ENCODE measurements at regions of chr9 and their contacts with region 1.

Region 1: GRCh38 chr9:22037954-22038690 is 29.0 kb upstream of the CDKN2B start:
- DNase-seq: peak; percentile 12

Region 2: DNA sequence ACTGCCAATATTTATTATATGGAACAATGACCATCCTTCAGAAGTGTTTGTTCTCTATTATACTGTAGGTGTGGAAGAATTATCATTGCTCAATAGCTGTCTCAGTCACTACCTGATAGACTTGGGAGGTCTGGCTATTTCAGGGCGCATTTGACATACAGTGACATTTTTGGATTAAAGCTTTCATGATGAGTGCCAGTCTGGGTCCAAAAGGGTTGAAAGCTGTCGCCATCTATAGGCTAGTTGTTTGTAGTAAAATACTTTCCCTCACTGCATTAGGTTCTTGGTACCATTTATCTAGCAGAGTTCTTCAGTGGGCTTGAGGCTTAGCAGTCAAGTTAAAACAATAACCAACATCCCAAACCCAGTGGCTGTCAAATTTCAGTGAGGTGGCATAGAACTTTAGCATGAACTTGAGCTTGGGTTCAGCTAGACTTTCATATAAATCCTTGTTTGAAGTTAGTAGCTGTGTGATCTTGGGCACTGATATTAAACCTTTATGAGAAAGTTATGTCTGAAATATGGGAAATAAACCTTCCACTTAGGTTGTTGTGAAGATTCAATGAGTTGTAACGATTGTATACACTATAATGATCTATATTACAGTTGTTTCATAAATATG is 81.5 kb after region 1 on chr9:
- in situ Hi-C with region 1: loop called (anchors 5 kb)
- DNase-seq: peak; percentile 8